Endothelial cell of umbilical vein (primary cell): ENCODE measurements at regions of chr7 and their contacts with region 1.

Region 1: DNA sequence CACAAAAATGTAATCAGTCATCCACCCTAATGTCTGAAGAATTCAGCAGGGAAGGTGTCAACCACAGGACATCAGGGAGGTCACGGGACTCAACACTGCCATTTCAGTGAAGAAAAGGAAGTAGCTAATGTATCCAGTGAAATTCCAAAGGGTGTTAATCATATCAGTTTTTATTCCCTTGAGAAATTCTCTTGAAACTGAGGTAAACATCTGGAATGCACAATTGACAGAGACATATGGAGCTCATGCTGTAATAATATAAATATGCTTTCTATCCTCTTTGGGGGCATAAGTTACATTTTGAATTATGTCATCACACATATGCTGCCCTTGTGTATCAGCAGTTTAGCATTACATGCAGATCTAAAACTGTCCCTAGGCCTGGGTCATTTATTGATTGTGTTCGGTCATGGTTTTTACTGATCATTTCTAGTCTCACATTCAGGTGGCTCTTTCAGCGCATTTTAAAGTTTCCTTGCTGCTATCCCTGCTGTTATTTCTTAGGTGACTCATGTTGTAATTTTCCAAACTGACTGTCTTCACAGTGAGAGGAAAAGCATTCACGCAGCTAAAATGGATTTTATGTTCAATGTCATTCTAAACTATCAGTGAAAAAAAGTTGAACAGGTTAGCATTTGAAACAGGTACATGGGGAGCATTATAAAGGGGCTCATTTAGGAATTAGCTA is 273.9 kb downstream of the TSPAN12 start:
- DNase-seq: peak; percentile 77
- H3K4me3 ChIP-seq: no peak overlapping the region
- H3K27ac ChIP-seq: peak overlapping the region; percentile 65
- H3K4me1 ChIP-seq: peaks cover 18% of the 10 kb centered on the region
- H3K27me3 ChIP-seq: no peaks in the 10 kb centered on the region
- CTCF ChIP-seq: no peak
- POLR2A ChIP-seq: peak; percentile 48

Region 2: DNA sequence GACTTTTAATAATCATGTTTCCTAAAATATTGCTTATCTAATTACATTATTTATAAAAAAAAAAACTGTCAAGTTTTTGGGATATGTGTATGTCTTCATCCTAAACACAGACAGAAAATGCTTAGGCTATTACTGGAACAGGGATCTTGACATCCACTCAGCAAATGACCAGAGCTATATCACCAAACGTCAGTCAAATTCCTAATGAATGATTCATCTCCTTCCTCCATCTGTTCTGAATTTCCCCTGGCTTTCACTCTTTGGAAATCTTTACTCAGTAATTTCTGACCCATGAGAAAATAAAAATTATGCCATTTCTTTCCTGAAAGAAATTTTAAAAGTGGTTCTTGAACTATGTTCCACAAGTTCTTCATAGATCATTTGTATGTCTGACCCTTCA is 863.5 kb before region 1 on chr7:
- CTCF ChIA-PET with region 1: no interaction called
- POLR2A ChIA-PET with region 1: no interaction called
- dilution Hi-C with region 1: no loop called
- intact Hi-C with region 1: loop called (anchors 2 kb)
- DNase-seq: peak; percentile 92
- H3K4me3 ChIP-seq: no peak overlapping the region
- H3K27ac ChIP-seq: peak overlapping the region; percentile 90
- H3K4me1 ChIP-seq: peaks cover 20% of the 10 kb centered on the region
- H3K27me3 ChIP-seq: no peaks in the 10 kb centered on the region
- CTCF ChIP-seq: no peak
- POLR2A ChIP-seq: no peak

Region 3: GRCh38 chr7:120941064-120941463 is 357.0 kb after region 1 on chr7:
- CTCF ChIA-PET with region 1: no interaction called
- POLR2A ChIA-PET with region 1: no interaction called
- dilution Hi-C with region 1: no loop called
- intact Hi-C with region 1: loop called (anchors 5 kb)
- DNase-seq: peak; percentile 75
- H3K4me3 ChIP-seq: no peak overlapping the region
- H3K27ac ChIP-seq: peak overlapping the region; percentile 87
- H3K4me1 ChIP-seq: peaks cover 46% of the 10 kb centered on the region
- H3K27me3 ChIP-seq: no peaks in the 10 kb centered on the region
- CTCF ChIP-seq: peak in 1 of 2 donors; percentile 26
- POLR2A ChIP-seq: no peak